ENCODE measurements at regions of chr3 and their contacts with region 1.

Region 1: GRCh38 chr3:69306239-69307185 is 79.4 kb downstream of the FRMD4B start:
- DNase-seq: peak; percentile 69 to 74 (median 72)
- H3K4me3 ChIP-seq: no peak overlapping the region
- H3K4me3 Mint-ChIP-seq: peak overlapping the region in 2 of 8 donors; percentile 2 to 30
- H3K27ac ChIP-seq: no peak overlapping the region
- H3K27ac Mint-ChIP-seq: peak overlapping the region in 2 of 7 donors; percentile 19 to 28
- H3K4me1 ChIP-seq: no peaks in the 10 kb centered on the region
- H3K4me1 Mint-ChIP-seq: peaks cover 4 to 8% (median 6%) of the 10 kb centered on the region in 4 donors
- H3K27me3 ChIP-seq: no peaks in the 10 kb centered on the region
- H3K27me3 Mint-ChIP-seq: no peaks in the 10 kb centered on the region

Region 2: GRCh38 chr3:69108811-69109210 is 197.7 kb before region 1 on chr3:
- CTCF ChIA-PET with region 1: no interaction called
- POLR2A ChIA-PET with region 1: no interaction called
- intact Hi-C with region 1: no loop called
- DNase-seq: no peak
- H3K4me3 ChIP-seq: no peak overlapping the region
- H3K4me3 Mint-ChIP-seq: no peak overlapping the region
- H3K27ac ChIP-seq: no peak overlapping the region
- H3K27ac Mint-ChIP-seq: peak overlapping the region in 5 of 7 donors; percentile 10 to 63 (median 43)
- H3K4me1 ChIP-seq: peaks cover 15% of the 10 kb centered on the region
- H3K4me1 Mint-ChIP-seq: peaks cover 14 to 26% (median 20%) of the 10 kb centered on the region in 4 donors
- H3K27me3 ChIP-seq: no peaks in the 10 kb centered on the region
- H3K27me3 Mint-ChIP-seq: no peaks in the 10 kb centered on the region

Region 3: GRCh38 chr3:69120879-69121464 is 185.5 kb before region 1 on chr3:
- CTCF ChIA-PET with region 1: interaction called, 34 read pairs
- POLR2A ChIA-PET with region 1: no interaction called
- intact Hi-C with region 1: loop called (anchors 1 kb)
- DNase-seq: peak; percentile 75 to 80 (median 79)
- H3K4me3 ChIP-seq: no peak overlapping the region
- H3K4me3 Mint-ChIP-seq: no peak overlapping the region
- H3K27ac ChIP-seq: no peak overlapping the region
- H3K27ac Mint-ChIP-seq: no peak overlapping the region
- H3K4me1 ChIP-seq: no peaks in the 10 kb centered on the region
- H3K4me1 Mint-ChIP-seq: peaks cover 5% of the 10 kb centered on the region in 4 donors
- H3K27me3 ChIP-seq: no peaks in the 10 kb centered on the region
- H3K27me3 Mint-ChIP-seq: peaks cover 0 to 1% of the 10 kb centered on the region in 2 donors

Region 4: GRCh38 chr3:69200384-69201068 is 106.0 kb before region 1 on chr3:
- CTCF ChIA-PET with region 1: interaction called, 10 read pairs
- POLR2A ChIA-PET with region 1: interaction called, 4 read pairs
- intact Hi-C with region 1: loop called (anchors 1 kb)
- DNase-seq: peak; percentile 20 to 47 (median 27)
- H3K4me3 ChIP-seq: peak overlapping the region; percentile 82 to 94
- H3K4me3 Mint-ChIP-seq: peak overlapping the region; percentile 92 to 97 (median 96)
- H3K27ac ChIP-seq: peak overlapping the region; percentile 79
- H3K27ac Mint-ChIP-seq: peak overlapping the region; percentile 94 to 98 (median 97)
- H3K4me1 ChIP-seq: peaks cover 28% of the 10 kb centered on the region
- H3K4me1 Mint-ChIP-seq: peaks cover 29 to 64% (median 43%) of the 10 kb centered on the region in 4 donors
- H3K27me3 ChIP-seq: no peaks in the 10 kb centered on the region
- H3K27me3 Mint-ChIP-seq: no peaks in the 10 kb centered on the region

Region 5: GRCh38 chr3:69288161-69288895 is 18.2 kb before region 1 on chr3:
- CTCF ChIA-PET with region 1: interaction called, 31 read pairs
- POLR2A ChIA-PET with region 1: no interaction called
- intact Hi-C with region 1: no loop called
- DNase-seq: no peak
- H3K4me3 ChIP-seq: no peak overlapping the region
- H3K4me3 Mint-ChIP-seq: peak overlapping the region; percentile 21 to 81 (median 71)
- H3K27ac ChIP-seq: no peak overlapping the region
- H3K27ac Mint-ChIP-seq: peak overlapping the region in 6 of 7 donors; percentile 39 to 90 (median 76)
- H3K4me1 ChIP-seq: peaks cover 12% of the 10 kb centered on the region
- H3K4me1 Mint-ChIP-seq: peaks cover 8 to 24% (median 20%) of the 10 kb centered on the region in 4 donors
- H3K27me3 ChIP-seq: no peaks in the 10 kb centered on the region
- H3K27me3 Mint-ChIP-seq: no peaks in the 10 kb centered on the region

Region 6: GRCh38 chr3:69410250-69410649 is 103.7 kb after region 1 on chr3:
- CTCF ChIA-PET with region 1: interaction called, 11 read pairs
- POLR2A ChIA-PET with region 1: no interaction called
- intact Hi-C with region 1: loop called (anchors 1 kb)
- DNase-seq: peak; percentile 48 to 63 (median 56)
- H3K4me3 ChIP-seq: no peak overlapping the region
- H3K4me3 Mint-ChIP-seq: no peak overlapping the region
- H3K27ac ChIP-seq: no peak overlapping the region
- H3K27ac Mint-ChIP-seq: no peak overlapping the region
- H3K4me1 ChIP-seq: no peaks in the 10 kb centered on the region
- H3K4me1 Mint-ChIP-seq: peaks cover 4 to 7% (median 5%) of the 10 kb centered on the region in 4 donors
- H3K27me3 ChIP-seq: no peaks in the 10 kb centered on the region
- H3K27me3 Mint-ChIP-seq: peaks cover 2 to 3% of the 10 kb centered on the region in 2 donors

Measured in CD4-positive, alpha-beta memory T cell (primary cell).